B cell (primary cell): ENCODE measurements at regions of chr5 and their contacts with region 1.

Region 1: GRCh38 chr5:142108432-142109330 is at the start of gene NDFIP1:
- DNase-seq: peak; percentile 91
- ATAC-seq: peak; percentile 98
- H3K4me3 ChIP-seq: peak within 1 kb of the TSS; percentile 62 to 90 (median 77)
- H3K4me3 Mint-ChIP-seq: peak within 1 kb of the TSS; percentile 92
- H3K27ac ChIP-seq: peak within 1 kb of the TSS; percentile 49 to 83
- H3K27ac Mint-ChIP-seq: peak within 1 kb of the TSS; percentile 93
- H3K4me1 ChIP-seq: peaks cover 14 to 17% of the 10 kb centered on the region in 2 donors
- H3K4me1 Mint-ChIP-seq: peaks cover 31% of the 10 kb centered on the region
- H3K27me3 ChIP-seq: no peaks in the 10 kb centered on the region
- H3K27me3 Mint-ChIP-seq: no peaks in the 10 kb centered on the region
- CTCF ChIP-seq: no peak
- total RNA-seq, gene NDFIP1: 34.6 TPM in 2 replicates

Region 2: DNA sequence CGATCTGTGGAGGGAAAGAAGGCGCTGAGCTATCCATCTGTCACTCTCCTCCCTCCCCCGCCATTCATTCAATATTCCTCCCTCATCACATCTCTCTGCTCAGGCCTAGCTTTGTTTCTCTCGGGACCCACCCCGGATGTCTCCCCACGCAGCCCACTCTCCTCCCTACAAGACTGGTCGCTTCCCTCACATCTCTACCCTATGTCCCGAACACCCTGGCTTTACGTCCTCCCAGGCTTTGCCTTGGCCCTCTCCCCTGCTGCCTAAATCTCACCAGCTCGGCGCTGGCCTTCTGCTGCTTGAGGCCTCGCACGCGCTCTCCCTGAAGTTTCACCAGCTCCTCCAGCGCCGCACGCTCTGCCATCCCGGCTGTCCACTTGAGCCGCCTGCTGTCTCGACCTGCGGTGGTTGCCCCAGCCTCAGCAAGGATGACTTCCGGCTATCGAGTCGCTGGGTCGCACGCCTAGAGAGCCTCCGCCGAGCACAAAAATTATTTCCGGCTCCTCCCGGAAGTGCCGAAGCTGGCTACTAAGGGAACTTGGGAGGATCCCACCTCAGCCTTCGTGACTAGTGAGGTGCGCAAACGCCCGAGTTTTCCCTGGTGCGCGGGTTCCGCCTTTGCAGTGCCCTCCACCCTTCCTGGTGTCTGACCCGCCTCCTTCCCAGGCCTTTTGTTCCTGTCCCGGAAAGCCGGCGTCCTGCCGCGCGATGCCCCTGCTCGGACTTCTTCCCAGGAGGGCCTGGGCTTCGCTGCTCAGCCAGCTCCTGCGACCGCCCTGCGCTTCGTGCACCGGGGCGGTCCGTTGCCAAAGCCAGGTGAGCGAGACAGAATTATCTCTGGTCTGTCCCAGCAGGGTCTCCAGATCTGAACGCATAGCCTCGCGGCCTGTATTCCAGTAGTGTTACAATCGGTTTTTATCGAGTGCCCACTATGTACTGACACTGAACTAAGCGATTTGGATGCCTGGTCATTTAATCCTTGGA is 1417.4 kb before region 1 on chr5 and contains the starts of genes HARS1 and HARS2:
- CTCF ChIA-PET with region 1: no interaction called
- POLR2A ChIA-PET with region 1: no interaction called
- intact Hi-C with region 1: loop called (anchors 5 kb)
- DNase-seq: peak; percentile 87
- ATAC-seq: peak; percentile 97
- H3K4me3 ChIP-seq: peak within 1 kb of the TSS; percentile 89 to 98 (median 97)
- H3K4me3 Mint-ChIP-seq: peak within 1 kb of the TSS; percentile 99
- H3K27ac ChIP-seq: peak within 1 kb of the TSS; percentile 68 to 81
- H3K27ac Mint-ChIP-seq: peak within 1 kb of the TSS; percentile 94
- H3K4me1 ChIP-seq: peaks cover 14% of the 10 kb centered on the region in 2 donors
- H3K4me1 Mint-ChIP-seq: peaks cover 30% of the 10 kb centered on the region
- H3K27me3 ChIP-seq: no peaks in the 10 kb centered on the region
- H3K27me3 Mint-ChIP-seq: no peaks in the 10 kb centered on the region
- CTCF ChIP-seq: no peak
- total RNA-seq, gene HARS1: 60.5 and 65.6 TPM in 2 replicates
- total RNA-seq, gene HARS2: 65.1 and 68.0 TPM in 2 replicates

Region 3: DNA sequence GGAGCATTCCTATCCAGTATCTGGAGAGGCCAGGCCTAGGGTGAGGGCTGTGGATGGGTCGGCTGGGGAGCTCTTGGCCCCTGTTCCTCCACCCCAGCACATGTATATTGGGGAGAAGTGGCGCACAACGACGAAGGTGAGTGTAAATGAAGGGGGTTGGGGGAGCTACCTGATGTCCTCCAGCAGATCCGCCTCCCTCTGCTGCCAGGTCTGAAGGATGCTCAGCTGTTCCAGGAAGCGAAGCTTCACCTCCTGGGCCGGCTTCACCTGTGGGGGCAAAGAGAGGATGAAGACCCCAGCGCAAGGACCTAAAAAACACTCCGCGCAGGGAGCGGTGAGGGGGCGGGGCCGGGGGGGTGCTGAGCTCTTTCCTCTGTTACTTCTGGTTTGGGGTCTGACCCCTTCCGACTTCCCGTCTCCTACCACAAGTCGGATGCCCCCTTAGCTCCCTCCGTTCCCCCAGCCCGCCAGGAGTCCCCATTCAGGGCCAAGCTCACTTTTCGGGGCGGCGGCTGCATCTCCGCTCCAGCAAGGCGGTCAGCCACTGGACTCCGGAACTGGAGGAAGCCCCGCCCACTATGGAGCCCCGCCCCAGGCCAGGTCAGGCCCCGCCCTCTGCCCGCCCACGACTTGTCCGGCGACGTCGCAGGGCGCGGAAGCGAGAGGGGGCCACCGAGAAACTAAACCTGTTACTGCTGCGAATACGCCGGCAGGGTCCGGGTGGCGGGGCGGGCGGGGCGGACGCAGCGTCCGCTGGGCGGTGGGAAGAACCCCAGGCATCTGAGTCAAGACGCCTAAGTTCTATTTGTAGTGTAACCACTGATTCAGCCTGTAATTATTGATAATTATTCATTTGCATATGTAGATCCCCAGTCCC is 457.6 kb before region 1 on chr5 and contains the start of gene FCHSD1:
- CTCF ChIA-PET with region 1: no interaction called
- POLR2A ChIA-PET with region 1: no interaction called
- intact Hi-C with region 1: loop called (anchors 10 kb)
- DNase-seq: peak; percentile 89
- ATAC-seq: peak; percentile 100
- H3K4me3 ChIP-seq: peak within 1 kb of the TSS; percentile 53 to 84 (median 70)
- H3K4me3 Mint-ChIP-seq: peak within 1 kb of the TSS; percentile 99
- H3K27ac ChIP-seq: peak within 1 kb of the TSS; percentile 60 to 82
- H3K27ac Mint-ChIP-seq: peak within 1 kb of the TSS; percentile 98
- H3K4me1 ChIP-seq: peaks cover 14 to 22% of the 10 kb centered on the region in 2 donors
- H3K4me1 Mint-ChIP-seq: peaks cover 34% of the 10 kb centered on the region
- H3K27me3 ChIP-seq: peaks cover 0 to 8% (median 0%) of the 10 kb centered on the region in 4 experiments
- H3K27me3 Mint-ChIP-seq: peaks cover 7% of the 10 kb centered on the region
- CTCF ChIP-seq: no peak
- total RNA-seq, gene FCHSD1: 114 and 123 TPM in 2 replicates

Region 4: DNA sequence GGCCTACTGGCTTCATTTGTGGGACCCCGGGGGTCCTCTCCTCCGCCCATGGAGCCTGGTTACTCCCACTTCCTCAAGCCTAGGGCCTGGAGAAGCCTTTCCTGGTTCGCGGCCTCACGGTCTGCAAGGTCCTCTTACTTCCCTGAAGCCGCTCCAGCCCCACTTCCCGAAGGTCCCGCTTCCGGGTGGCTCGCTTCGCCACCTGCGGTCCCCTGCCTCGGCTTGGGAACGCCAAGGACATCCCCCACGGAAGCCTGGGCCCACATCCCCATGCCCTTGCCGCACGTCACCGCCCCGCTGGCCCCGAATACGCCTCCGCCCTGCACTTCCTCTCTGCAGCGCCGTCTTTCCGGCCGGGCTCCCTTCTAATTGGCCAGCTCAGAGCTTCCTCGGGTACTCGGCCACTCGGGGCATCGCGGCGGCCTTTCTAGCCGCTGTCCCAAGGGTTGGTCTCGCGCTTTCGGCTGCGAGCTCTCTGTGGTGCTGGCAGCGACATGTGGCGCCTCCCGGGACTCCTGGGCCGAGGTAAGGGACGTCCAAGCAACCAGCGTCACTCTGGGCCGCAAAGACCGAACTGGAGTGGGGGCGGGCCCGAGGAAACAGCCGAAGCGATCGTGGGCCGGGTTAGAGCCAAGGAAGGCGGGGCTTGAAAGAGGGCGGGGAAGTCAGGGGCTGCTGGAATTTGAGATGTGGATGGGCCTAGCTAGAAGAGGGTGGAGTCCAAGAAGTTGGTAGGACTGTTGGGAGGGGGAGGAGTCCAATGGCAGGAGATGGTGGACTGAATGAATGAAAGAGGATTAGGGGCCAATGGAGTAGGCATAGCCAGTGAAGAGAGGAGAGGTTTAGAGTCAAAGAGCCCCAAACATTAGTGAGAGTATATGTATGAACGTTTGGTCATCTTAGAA is 185.0 kb before region 1 on chr5 and contains the start of gene DELE1:
- CTCF ChIA-PET with region 1: no interaction called
- POLR2A ChIA-PET with region 1: no interaction called
- intact Hi-C with region 1: loop called (anchors 2 kb)
- DNase-seq: peak; percentile 94
- ATAC-seq: peak; percentile 94
- H3K4me3 ChIP-seq: peak within 1 kb of the TSS; percentile 63 to 92 (median 85)
- H3K4me3 Mint-ChIP-seq: peak within 1 kb of the TSS; percentile 92
- H3K27ac ChIP-seq: peak within 1 kb of the TSS; percentile 95 to 98
- H3K27ac Mint-ChIP-seq: peak within 1 kb of the TSS; percentile 96
- H3K4me1 ChIP-seq: peaks cover 12 to 18% of the 10 kb centered on the region in 2 donors
- H3K4me1 Mint-ChIP-seq: peaks cover 20% of the 10 kb centered on the region
- H3K27me3 ChIP-seq: no peaks in the 10 kb centered on the region
- H3K27me3 Mint-ChIP-seq: no peaks in the 10 kb centered on the region
- CTCF ChIP-seq: no peak
- total RNA-seq, gene DELE1: 124 and 134 TPM in 2 replicates

Region 5: DNA sequence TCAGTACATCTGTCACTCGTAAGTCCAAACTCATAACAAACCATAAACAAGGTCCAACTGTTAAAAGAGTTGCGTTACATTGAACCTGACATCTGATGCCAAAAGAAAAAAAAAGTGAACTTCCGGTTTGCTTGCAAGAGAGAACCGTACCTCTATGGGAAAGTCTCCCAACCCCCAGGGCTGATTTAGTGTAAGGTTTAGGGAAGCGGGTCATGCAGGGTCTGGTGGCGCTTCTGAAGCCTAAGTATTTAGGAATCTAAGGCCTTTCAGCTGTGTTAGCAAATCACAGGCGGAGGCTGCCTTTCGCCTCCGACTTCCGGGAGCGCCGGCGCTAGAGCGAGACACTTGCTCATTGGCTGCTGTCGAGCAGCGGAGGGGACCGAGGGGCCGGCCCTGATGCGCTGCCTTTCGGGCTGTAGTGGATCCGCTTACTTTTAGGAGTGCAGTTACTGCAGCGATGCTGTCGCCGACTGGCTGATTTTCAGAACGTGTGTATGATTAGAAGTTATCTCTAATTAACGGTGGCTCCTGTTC is 83.8 kb before region 1 on chr5:
- CTCF ChIA-PET with region 1: no interaction called
- POLR2A ChIA-PET with region 1: interaction called, 3 read pairs
- intact Hi-C with region 1: loop called (anchors 1 kb)
- DNase-seq: peak; percentile 85
- ATAC-seq: peak; percentile 100
- H3K4me3 ChIP-seq: peak overlapping the region; percentile 38 to 63 (median 53)
- H3K4me3 Mint-ChIP-seq: peak overlapping the region; percentile 86
- H3K27ac ChIP-seq: peak overlapping the region; percentile 59 to 76
- H3K27ac Mint-ChIP-seq: peak overlapping the region; percentile 92
- H3K4me1 ChIP-seq: peaks cover 8 to 9% of the 10 kb centered on the region in 2 donors
- H3K4me1 Mint-ChIP-seq: peaks cover 12% of the 10 kb centered on the region
- H3K27me3 ChIP-seq: peaks cover 0 to 9% (median 5%) of the 10 kb centered on the region in 4 experiments
- H3K27me3 Mint-ChIP-seq: peaks cover 26% of the 10 kb centered on the region
- CTCF ChIP-seq: no peak

Region 6: DNA sequence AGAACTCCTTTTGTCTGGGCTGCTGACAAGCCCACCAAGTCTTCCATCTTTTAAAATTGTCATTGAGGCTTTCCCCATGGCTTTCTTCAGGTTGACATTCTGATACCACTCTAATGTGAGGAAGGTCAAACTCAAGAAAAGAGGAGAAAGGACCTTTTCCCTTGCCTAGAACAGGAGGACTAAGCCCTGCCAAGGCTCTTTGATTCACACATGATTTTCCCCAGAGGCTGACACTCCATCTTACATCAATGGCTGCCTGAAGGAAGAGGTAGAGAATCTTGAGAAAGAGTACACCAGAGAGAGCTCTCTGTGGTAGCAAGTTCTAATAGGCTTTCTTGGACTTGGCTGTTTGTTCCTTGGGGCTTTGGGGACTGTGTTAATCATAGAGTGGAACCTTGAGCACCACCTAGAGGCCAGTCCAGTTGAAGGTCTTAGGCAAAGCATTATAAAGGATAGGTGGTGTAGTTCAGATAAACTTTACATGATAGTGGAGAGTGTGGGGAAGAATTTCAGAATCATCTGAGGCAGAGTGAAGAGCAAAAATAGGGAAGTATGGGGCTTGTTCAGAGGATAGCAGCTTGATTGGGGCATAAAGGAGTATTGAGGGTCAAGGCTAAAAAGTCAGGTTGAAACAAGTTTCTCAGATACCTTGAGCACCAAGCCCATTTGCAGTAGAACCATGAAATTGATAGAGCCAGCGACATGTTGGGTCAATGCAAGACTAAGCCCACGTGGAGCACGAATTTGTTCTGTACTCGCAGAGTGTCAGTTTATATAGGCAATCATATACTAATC is 36.6 kb after region 1 on chr5:
- CTCF ChIA-PET with region 1: interaction called, 4 read pairs
- POLR2A ChIA-PET with region 1: interaction called, 3 read pairs
- intact Hi-C with region 1: loop called (anchors 1 kb)
- DNase-seq: peak; percentile 59
- ATAC-seq: peak; percentile 70
- H3K4me3 ChIP-seq: no peak overlapping the region
- H3K4me3 Mint-ChIP-seq: no peak overlapping the region
- H3K27ac ChIP-seq: no peak overlapping the region
- H3K27ac Mint-ChIP-seq: no peak overlapping the region
- H3K4me1 ChIP-seq: no peaks in the 10 kb centered on the region
- H3K4me1 Mint-ChIP-seq: no peaks in the 10 kb centered on the region
- H3K27me3 ChIP-seq: no peaks in the 10 kb centered on the region
- H3K27me3 Mint-ChIP-seq: no peaks in the 10 kb centered on the region
- CTCF ChIP-seq: peak; percentile 74

Region 7: GRCh38 chr5:142156839-142157463 is 48.3 kb after region 1 on chr5:
- CTCF ChIA-PET with region 1: no interaction called
- POLR2A ChIA-PET with region 1: no interaction called
- intact Hi-C with region 1: no loop called
- DNase-seq: no peak
- ATAC-seq: no peak
- H3K4me3 ChIP-seq: no peak overlapping the region
- H3K4me3 Mint-ChIP-seq: no peak overlapping the region
- H3K27ac ChIP-seq: no peak overlapping the region
- H3K27ac Mint-ChIP-seq: no peak overlapping the region
- H3K4me1 ChIP-seq: no peaks in the 10 kb centered on the region
- H3K4me1 Mint-ChIP-seq: no peaks in the 10 kb centered on the region
- H3K27me3 ChIP-seq: no peaks in the 10 kb centered on the region
- H3K27me3 Mint-ChIP-seq: no peaks in the 10 kb centered on the region
- CTCF ChIP-seq: no peak

Region 8: GRCh38 chr5:142246258-142246657 is 137.6 kb after region 1 on chr5:
- CTCF ChIA-PET with region 1: no interaction called
- POLR2A ChIA-PET with region 1: no interaction called
- intact Hi-C with region 1: no loop called
- DNase-seq: no peak
- ATAC-seq: no peak
- H3K4me3 ChIP-seq: no peak overlapping the region
- H3K4me3 Mint-ChIP-seq: no peak overlapping the region
- H3K27ac ChIP-seq: no peak overlapping the region
- H3K27ac Mint-ChIP-seq: no peak overlapping the region
- H3K4me1 ChIP-seq: no peaks in the 10 kb centered on the region
- H3K4me1 Mint-ChIP-seq: no peaks in the 10 kb centered on the region
- H3K27me3 ChIP-seq: peaks cover 0 to 3% (median 0%) of the 10 kb centered on the region in 4 experiments
- H3K27me3 Mint-ChIP-seq: peaks cover 6% of the 10 kb centered on the region
- CTCF ChIP-seq: no peak

Region 9: DNA sequence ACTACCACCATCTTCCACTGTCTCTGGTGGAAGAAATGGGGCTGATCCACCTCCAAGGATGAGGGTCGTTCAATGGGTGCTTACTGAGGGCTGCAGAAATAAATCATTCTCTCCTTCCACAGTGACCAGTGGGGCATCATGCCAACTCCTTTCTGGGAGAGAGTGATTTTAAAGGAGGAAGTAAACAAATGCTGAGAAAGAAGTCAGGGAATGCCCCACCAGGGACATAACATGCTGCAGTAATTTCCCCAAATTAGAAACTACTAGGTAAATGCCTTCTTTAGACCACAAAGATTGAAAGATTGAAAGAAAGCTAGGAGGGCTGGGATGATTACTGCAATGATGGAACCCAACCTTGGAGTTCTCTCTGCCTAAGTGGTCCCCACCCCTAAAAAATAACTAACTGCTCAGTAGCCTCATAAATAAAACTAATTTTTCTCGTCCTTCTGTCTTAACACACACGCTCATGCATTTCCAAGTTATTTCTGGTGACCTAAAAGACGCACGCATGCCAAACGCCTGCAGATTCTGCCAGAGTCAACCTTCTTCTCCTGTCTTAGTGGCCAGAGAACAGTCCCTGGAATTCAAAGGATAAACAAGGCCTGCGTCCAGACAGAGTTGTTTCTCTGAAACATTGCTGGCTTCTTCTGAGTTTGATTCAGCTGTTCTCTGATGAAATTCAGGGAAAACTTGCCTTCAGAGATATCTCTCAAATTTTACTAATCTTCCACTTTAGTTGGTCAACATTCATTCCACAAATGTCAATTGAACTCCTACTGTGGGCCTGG is 1044.8 kb after region 1 on chr5:
- CTCF ChIA-PET with region 1: no interaction called
- POLR2A ChIA-PET with region 1: no interaction called
- intact Hi-C with region 1: no loop called
- DNase-seq: no peak
- ATAC-seq: no peak
- H3K4me3 ChIP-seq: no peak overlapping the region
- H3K4me3 Mint-ChIP-seq: no peak overlapping the region
- H3K27ac ChIP-seq: no peak overlapping the region
- H3K27ac Mint-ChIP-seq: no peak overlapping the region
- H3K4me1 ChIP-seq: no peaks in the 10 kb centered on the region
- H3K4me1 Mint-ChIP-seq: peaks cover 2% of the 10 kb centered on the region
- H3K27me3 ChIP-seq: no peaks in the 10 kb centered on the region
- H3K27me3 Mint-ChIP-seq: no peaks in the 10 kb centered on the region
- CTCF ChIP-seq: no peak